IMR-90 (cell line): ENCODE measurements at regions of chr3 and their contacts with region 1.

Region 1: GRCh38 chr3:80969404-80969803 is 792.0 kb downstream of the GBE1 start:
- DNase-seq: no peak
- ATAC-seq: no peak
- H3K4me3 ChIP-seq: no peak overlapping the region
- H3K27ac ChIP-seq: no peak overlapping the region
- H3K4me1 ChIP-seq: no peaks in the 10 kb centered on the region
- H3K27me3 ChIP-seq: no peaks in the 10 kb centered on the region
- CTCF ChIP-seq: no peak
- POLR2A ChIP-seq: no peak
- RAD21 ChIP-seq: no peak

Region 2: DNA sequence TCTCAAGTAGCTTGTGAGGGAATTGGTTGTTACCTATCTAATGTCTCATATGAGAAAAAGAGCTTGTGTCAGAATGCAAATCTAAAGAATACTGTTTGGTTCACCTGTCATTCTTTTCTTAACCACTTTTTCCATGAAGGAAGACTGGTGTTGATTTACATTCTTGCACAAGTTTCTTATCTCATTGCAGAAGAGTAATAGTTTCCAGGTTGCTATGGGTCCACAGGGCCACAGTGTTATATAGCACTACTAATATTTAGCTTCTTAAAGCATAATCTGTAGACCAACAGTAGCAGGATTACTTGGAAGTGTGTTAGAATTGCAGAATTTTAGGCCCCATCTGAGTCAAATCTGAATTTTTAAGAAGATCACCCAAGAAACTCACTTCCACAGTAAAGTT is 94.5 kb after region 1 on chr3:
- CTCF ChIA-PET with region 1: no interaction called
- POLR2A ChIA-PET with region 1: no interaction called
- dilution Hi-C with region 1: no loop called
- in situ Hi-C with region 1: loop called (anchors 25 kb)
- intact Hi-C with region 1: no loop called
- DNase-seq: no peak
- ATAC-seq: no peak
- H3K4me3 ChIP-seq: no peak overlapping the region
- H3K27ac ChIP-seq: no peak overlapping the region
- H3K4me1 ChIP-seq: no peaks in the 10 kb centered on the region
- H3K27me3 ChIP-seq: no peaks in the 10 kb centered on the region
- CTCF ChIP-seq: no peak
- POLR2A ChIP-seq: no peak
- RAD21 ChIP-seq: no peak